Breast epithelium (tissue), 4 donors: ENCODE measurements at regions of chr2 and their contacts with region 1.

Region 1: DNA sequence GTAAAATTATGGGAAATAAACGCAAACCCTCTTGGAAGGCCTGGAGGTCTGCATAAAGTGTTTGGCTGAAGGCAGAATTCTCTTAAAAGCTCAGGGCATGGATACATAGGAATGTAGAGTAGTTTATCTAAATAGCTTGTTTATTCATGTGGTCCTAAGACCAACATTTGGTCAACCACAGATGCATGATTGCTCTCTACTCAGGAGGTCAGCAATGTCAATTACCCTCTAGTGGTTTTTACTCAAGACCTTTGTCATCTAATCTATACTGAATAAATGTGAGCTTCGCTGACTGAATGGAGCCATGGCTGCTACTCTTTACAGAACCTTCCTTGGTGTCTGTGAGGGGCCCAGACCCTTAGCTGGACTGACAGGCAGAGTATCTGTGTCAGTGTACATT is 139.8 kb downstream of the ATL2 start:
- DNase-seq: no peak
- H3K4me3 ChIP-seq: no peak overlapping the region
- H3K27ac ChIP-seq: no peak overlapping the region
- H3K4me1 ChIP-seq: peaks cover 0 to 7% of the 10 kb centered on the region in 2 donors
- H3K27me3 ChIP-seq: no peaks in the 10 kb centered on the region
- CTCF ChIP-seq: no peak
- POLR2A ChIP-seq: no peak

Region 2: DNA sequence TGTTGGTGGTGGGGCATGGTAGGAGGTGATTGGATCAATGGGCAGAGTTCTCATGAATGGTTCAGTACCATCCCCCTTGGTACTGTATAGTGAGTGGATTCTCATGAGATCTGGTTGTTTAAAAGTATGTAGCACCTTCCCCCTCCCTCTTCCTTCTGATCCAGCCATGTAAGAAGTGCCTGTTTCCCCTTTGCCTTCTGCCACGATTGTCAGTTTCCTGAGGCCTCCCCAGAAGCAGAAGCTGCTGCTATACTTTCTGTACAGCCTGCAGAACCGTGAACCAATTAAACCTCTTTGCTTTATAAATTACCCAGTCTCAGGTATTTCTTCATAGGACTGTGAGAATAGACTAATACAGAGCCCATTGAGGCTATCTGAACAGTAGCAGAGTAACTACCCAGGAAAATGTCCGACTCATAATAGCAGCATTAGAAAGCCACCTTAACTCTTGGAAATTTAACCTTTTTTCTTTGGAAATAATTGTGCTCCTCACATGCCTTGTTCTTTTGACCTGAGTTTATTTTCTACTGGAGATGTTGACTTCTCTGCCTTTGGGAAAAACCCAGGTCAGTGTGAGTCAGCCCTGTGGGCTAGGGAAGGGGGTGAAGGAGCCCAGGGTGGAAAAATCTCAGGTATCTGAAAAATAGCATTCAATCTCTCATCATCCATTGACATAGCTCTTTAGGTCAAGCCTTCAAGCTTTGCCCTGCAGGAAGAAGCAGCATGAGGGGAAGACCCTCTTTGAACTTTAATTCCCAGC is 179.5 kb before region 1 on chr2:
- intact Hi-C with region 1: no loop called
- DNase-seq: no peak
- H3K4me3 ChIP-seq: no peak overlapping the region
- H3K27ac ChIP-seq: no peak overlapping the region
- H3K4me1 ChIP-seq: no peaks in the 10 kb centered on the region
- H3K27me3 ChIP-seq: no peaks in the 10 kb centered on the region
- CTCF ChIP-seq: no peak
- POLR2A ChIP-seq: no peak

Region 3: GRCh38 chr2:38201784-38202183 is 35.5 kb before region 1 on chr2:
- intact Hi-C with region 1: loop called (anchors 2 kb)
- DNase-seq: no peak
- H3K4me3 ChIP-seq: no peak overlapping the region
- H3K27ac ChIP-seq: no peak overlapping the region
- H3K4me1 ChIP-seq: no peaks in the 10 kb centered on the region
- H3K27me3 ChIP-seq: no peaks in the 10 kb centered on the region
- CTCF ChIP-seq: no peak
- POLR2A ChIP-seq: no peak